ENCODE measurements at regions of chr9 and their contacts with region 1.

Region 1: GRCh38 chr9:127715394-127716337 is at the starts of genes PTRH1 and TTC16:
- DNase-seq: peak; percentile 88 to 98 (median 97)
- ATAC-seq: peak; percentile 93
- H3K4me3 ChIP-seq: peak within 1 kb of the TSS; percentile 88 to 96
- H3K4me3 Mint-ChIP-seq: peak within 1 kb of the TSS; percentile 98
- H3K27ac ChIP-seq: peak within 1 kb of the TSS; percentile 80 to 83
- H3K27ac Mint-ChIP-seq: peak within 1 kb of the TSS; percentile 96
- H3K4me1 ChIP-seq: peaks cover 47% of the 10 kb centered on the region
- H3K4me1 Mint-ChIP-seq: peaks cover 44% of the 10 kb centered on the region
- H3K27me3 ChIP-seq: no peaks in the 10 kb centered on the region
- H3K27me3 Mint-ChIP-seq: no peaks in the 10 kb centered on the region
- CTCF ChIP-seq: no peak
- total RNA-seq, gene PTRH1: 4.6 to 5.3 TPM
- total RNA-seq, gene TTC16: 5.2 to 5.5 TPM

Region 2: DNA sequence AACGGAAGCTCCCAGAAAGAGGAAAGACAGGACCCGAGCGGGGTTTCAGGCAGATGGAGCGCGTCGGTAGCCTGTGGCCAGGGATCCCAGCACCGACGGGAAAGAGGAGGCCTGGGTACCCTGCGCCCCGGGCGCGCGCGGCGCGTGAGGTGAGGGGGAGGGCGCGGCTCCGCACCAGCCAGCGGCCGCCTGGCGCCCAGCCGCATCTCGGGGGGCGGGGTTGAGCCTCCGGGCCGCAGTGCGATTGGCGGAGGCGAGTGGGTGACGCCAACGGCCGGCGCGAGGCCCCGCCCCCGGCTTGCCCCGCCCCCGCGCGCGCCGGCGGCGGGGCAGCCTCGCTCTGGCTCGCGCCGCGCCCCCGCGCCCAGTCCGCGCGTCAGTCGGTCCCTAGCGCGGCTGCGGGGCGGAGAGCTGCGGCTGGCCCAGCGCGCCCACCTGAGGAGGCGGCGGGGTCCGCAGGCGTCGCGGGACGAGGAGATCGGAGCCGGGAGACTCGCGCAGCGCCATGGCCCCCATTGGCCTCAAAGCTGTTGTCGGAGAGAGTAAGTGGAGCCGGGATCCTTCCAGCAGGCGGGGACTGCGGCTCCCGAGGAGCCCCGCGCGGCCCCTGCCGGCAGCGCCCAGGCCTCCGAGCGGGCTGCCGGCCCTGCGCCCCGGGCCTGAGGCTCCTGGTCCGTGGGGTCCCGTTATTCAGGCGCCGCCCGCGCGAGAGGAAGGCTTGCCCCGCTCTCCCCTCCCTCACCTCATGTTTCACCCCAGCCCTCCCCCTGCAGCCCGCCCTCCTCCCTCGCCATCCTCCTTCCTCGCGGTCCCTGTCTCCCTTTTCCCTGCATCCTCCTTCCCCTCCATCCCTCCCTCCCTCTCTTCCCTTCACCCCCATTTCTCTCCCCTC is 103.5 kb before region 1 on chr9 and contains the start of gene STXBP1:
- CTCF ChIA-PET with region 1: no interaction called
- POLR2A ChIA-PET with region 1: interaction called, 6 read pairs
- intact Hi-C with region 1: loop called in 1 of 2 experiments (anchors 1 kb)
- DNase-seq: peak; percentile 70 to 92 (median 83)
- ATAC-seq: peak; percentile 80
- H3K4me3 ChIP-seq: peak within 1 kb of the TSS; percentile 59 to 82
- H3K4me3 Mint-ChIP-seq: peak within 1 kb of the TSS; percentile 93
- H3K27ac ChIP-seq: peak within 1 kb of the TSS in 1 of 2 experiments; percentile 42
- H3K27ac Mint-ChIP-seq: peak within 1 kb of the TSS; percentile 92
- H3K4me1 ChIP-seq: peaks cover 32% of the 10 kb centered on the region
- H3K4me1 Mint-ChIP-seq: peaks cover 36% of the 10 kb centered on the region
- H3K27me3 ChIP-seq: peaks cover 4 to 9% of the 10 kb centered on the region in 2 experiments
- H3K27me3 Mint-ChIP-seq: peaks cover 9% of the 10 kb centered on the region
- CTCF ChIP-seq: no peak
- total RNA-seq, gene STXBP1: 7.7 to 8.9 TPM

Region 3: GRCh38 chr9:127698985-127699670 is 16.5 kb before region 1 on chr9:
- CTCF ChIA-PET with region 1: no interaction called
- POLR2A ChIA-PET with region 1: interaction called, 4 read pairs
- intact Hi-C with region 1: loop called (anchors 1 kb)
- DNase-seq: peak; percentile 63 to 93 (median 84)
- ATAC-seq: peak; percentile 99
- H3K4me3 ChIP-seq: peak overlapping the region; percentile 52 to 65
- H3K4me3 Mint-ChIP-seq: peak overlapping the region; percentile 83
- H3K27ac ChIP-seq: peak overlapping the region; percentile 21 to 80
- H3K27ac Mint-ChIP-seq: peak overlapping the region; percentile 39
- H3K4me1 ChIP-seq: peaks cover 8% of the 10 kb centered on the region
- H3K4me1 Mint-ChIP-seq: peaks cover 12% of the 10 kb centered on the region
- H3K27me3 ChIP-seq: no peaks in the 10 kb centered on the region
- H3K27me3 Mint-ChIP-seq: no peaks in the 10 kb centered on the region
- CTCF ChIP-seq: no peak

Region 4: GRCh38 chr9:128127990-128128835 is 412.5 kb after region 1 on chr9:
- CTCF ChIA-PET with region 1: no interaction called
- POLR2A ChIA-PET with region 1: no interaction called
- intact Hi-C with region 1: loop called in 1 of 2 experiments (anchors 1 kb)
- DNase-seq: peak; percentile 69 to 95 (median 83)
- ATAC-seq: peak; percentile 81
- H3K4me3 ChIP-seq: peak overlapping the region; percentile 99 to 100
- H3K4me3 Mint-ChIP-seq: peak overlapping the region; percentile 99
- H3K27ac ChIP-seq: peak overlapping the region; percentile 99
- H3K27ac Mint-ChIP-seq: peak overlapping the region; percentile 99
- H3K4me1 ChIP-seq: peaks cover 31% of the 10 kb centered on the region
- H3K4me1 Mint-ChIP-seq: peaks cover 38% of the 10 kb centered on the region
- H3K27me3 ChIP-seq: no peaks in the 10 kb centered on the region
- H3K27me3 Mint-ChIP-seq: peaks cover 2% of the 10 kb centered on the region
- CTCF ChIP-seq: no peak

Measured in CD8-positive, alpha-beta T cell (primary cell).